Vagina (tissue), 2 donors: ENCODE measurements at regions of chr15 and their contacts with region 1.

Region 1: DNA sequence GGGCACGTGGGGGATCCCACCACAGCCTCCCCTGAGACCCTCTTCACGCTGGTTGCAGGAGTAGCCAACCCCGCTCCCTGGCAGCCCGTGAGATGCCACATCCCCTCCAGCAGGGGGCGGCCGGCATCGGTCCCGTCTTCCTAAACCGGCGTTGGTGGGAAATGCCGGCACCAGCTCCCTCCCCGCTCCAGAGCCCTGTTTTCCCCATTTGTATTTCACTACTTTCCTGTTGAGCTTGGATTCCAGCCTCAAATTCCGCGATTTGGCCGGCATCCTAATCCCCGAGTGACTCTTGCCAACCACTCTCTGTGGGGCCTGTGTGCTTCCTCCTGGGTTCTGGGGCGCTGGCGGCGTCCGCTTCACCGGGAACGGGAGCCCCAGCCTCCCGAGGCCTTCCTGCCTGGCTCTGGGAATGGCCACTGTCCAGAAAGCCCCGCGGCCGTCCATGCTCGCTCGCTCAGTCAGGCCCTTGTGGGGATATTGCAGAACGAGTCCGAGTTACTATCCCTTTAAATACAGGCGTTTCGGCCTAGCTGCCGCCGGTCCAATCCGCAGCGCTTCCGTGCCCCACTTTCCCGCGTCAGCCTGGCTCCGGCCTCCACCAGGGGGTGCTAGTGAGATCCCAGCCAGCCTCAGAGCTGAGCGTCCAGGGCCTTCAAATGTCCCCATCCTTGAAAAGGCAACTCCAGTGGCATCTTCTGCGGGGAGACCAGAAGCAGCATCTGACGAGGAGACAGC is 8.1 kb upstream of the ADAMTS17 start:
- DNase-seq: peak; percentile 95 to 96
- H3K4me3 ChIP-seq: peak overlapping the region; percentile 54 to 64
- H3K27ac ChIP-seq: peak overlapping the region; percentile 90
- H3K4me1 ChIP-seq: peaks cover 13% of the 10 kb centered on the region
- H3K27me3 ChIP-seq: no peaks in the 10 kb centered on the region
- CTCF ChIP-seq: peak; percentile 33 to 88 (median 58)
- POLR2A ChIP-seq: peak in 1 of 2 donors; percentile 22

Region 2: DNA sequence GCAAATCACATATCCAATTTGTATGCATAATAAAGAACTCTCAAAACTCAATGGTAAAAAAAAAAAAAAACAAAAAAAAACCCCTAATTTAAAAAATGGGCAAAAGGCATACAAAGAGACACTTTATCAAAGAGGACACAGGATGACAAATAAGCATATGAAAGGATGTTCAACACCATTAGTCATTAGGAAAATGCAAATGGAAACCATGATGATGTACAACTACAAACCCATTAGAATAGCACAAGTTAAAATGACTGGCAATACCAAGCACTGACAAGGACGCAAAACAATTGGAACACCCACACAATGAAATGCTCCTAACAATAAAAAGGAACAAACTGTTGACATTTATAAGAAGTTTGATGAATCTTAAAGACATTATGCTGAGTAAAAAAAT is 55.3 kb after region 1 on chr15:
- intact Hi-C with region 1: no loop called
- DNase-seq: no peak
- H3K4me3 ChIP-seq: no peak overlapping the region
- H3K27ac ChIP-seq: no peak overlapping the region
- H3K4me1 ChIP-seq: no peaks in the 10 kb centered on the region
- H3K27me3 ChIP-seq: no peaks in the 10 kb centered on the region
- CTCF ChIP-seq: no peak
- POLR2A ChIP-seq: no peak

Region 3: GRCh38 chr15:100572362-100572983 is 222.6 kb after region 1 on chr15:
- intact Hi-C with region 1: loop called (anchors 5 kb)
- DNase-seq: no peak
- H3K4me3 ChIP-seq: no peak overlapping the region
- H3K27ac ChIP-seq: no peak overlapping the region
- H3K4me1 ChIP-seq: no peaks in the 10 kb centered on the region
- H3K27me3 ChIP-seq: no peaks in the 10 kb centered on the region
- CTCF ChIP-seq: peak; percentile 27 to 61 (median 33)
- POLR2A ChIP-seq: no peak